Left lung (tissue), 14 donors: ENCODE measurements at regions of chr5 and their contacts with region 1.

Region 1: DNA sequence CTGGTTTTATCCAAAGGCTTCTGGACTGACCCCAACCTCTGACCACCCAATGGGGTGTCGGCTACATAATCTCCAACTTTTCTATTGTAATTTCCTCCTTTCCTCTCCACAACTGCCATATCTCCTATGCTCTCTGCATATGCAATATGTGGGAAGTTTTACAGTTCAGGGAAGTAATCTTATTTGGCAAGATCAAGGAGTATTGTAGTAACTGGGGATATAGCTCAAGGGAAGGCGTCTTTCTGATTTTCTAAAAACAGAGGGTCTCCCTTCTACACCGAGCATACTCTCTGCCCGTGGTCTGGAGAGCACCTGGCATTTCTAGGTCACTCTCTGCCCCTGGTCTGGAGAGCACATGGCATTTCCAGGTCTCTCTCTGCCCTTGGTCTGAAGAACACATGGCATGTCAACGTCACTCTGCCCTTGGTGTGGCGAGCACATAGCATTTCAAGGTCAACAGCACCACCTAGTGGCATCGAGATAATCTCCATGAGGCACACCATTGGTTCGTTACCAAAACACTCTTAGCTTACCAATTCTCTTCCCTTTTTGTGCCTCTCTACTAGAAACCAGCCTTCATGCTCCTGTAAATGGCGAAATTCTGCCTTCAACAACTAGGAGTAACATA is 616.4 kb upstream of the NUDT12 start:
- DNase-seq: no peak
- ATAC-seq: peak; percentile 89
- H3K4me3 ChIP-seq: no peak overlapping the region
- H3K27ac ChIP-seq: no peak overlapping the region
- H3K4me1 ChIP-seq: no peaks in the 10 kb centered on the region
- H3K27me3 ChIP-seq: no peaks in the 10 kb centered on the region
- CTCF ChIP-seq: peak in 1 of 2 donors; percentile 49

Region 2: GRCh38 chr5:103582364-103582763 is 596.6 kb before region 1 on chr5:
- intact Hi-C with region 1: loop called in 1 of 2 experiments (anchors 10 kb)
- DNase-seq: peak in 2 of 4 donors; percentile 40 to 69
- ATAC-seq: peak; percentile 52
- H3K4me3 ChIP-seq: no peak overlapping the region
- H3K27ac ChIP-seq: no peak overlapping the region
- H3K4me1 ChIP-seq: no peaks in the 10 kb centered on the region
- H3K27me3 ChIP-seq: no peaks in the 10 kb centered on the region
- CTCF ChIP-seq: peak in 1 of 2 donors; percentile 32

Region 3: GRCh38 chr5:104327801-104328200 is 148.9 kb after region 1 on chr5:
- intact Hi-C with region 1: no loop called
- DNase-seq: peak in 2 of 4 donors; percentile 53 to 61
- ATAC-seq: no peak
- H3K4me3 ChIP-seq: no peak overlapping the region
- H3K27ac ChIP-seq: no peak overlapping the region
- H3K4me1 ChIP-seq: no peaks in the 10 kb centered on the region
- H3K27me3 ChIP-seq: no peaks in the 10 kb centered on the region
- CTCF ChIP-seq: no peak

Region 4: DNA sequence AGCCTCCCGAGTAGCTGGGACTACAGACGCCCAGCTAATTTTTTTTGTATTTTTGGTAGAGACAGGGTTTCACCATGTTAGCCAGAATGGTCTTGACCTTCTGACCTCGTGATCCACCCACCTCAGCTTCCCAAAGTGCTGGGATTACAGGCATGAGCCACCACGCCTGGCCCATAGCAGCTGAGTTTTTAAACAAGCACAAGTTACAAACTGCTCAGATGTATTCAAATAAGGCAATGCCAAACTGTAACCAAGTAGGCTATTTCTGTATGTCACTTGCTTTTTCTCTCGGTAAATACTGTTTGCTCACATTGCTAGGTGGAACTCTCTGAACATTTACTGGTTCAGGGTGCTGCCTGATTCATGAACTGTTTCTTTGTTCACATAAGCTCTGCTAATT is 183.0 kb after region 1 on chr5:
- intact Hi-C with region 1: no loop called
- DNase-seq: no peak
- ATAC-seq: no peak
- H3K4me3 ChIP-seq: no peak overlapping the region
- H3K27ac ChIP-seq: no peak overlapping the region
- H3K4me1 ChIP-seq: no peaks in the 10 kb centered on the region
- H3K27me3 ChIP-seq: no peaks in the 10 kb centered on the region
- CTCF ChIP-seq: no peak

Region 5: DNA sequence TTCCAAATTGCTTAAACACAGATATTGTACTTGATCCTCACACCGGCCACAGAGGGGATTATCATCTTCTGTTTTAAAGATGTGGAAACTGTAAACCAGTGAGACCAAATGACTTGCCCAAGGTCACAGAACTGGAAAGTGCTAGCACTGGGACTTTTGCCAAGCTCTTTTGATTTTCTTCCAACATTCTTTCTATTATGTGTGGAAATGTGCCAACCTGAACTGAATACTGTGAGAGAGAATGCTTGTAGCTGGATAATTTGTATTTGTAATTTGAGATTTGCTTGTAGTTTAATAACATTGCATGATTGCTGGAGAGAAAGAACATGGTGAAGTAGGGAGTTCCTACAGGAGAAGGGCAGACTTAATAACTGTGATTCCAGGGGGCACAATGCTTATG is 361.5 kb after region 1 on chr5:
- intact Hi-C with region 1: no loop called
- DNase-seq: peak in 2 of 4 donors; percentile 83 to 87
- ATAC-seq: peak; percentile 14
- H3K4me3 ChIP-seq: no peak overlapping the region
- H3K27ac ChIP-seq: no peak overlapping the region
- H3K4me1 ChIP-seq: no peaks in the 10 kb centered on the region
- H3K27me3 ChIP-seq: no peaks in the 10 kb centered on the region
- CTCF ChIP-seq: no peak

Region 6: DNA sequence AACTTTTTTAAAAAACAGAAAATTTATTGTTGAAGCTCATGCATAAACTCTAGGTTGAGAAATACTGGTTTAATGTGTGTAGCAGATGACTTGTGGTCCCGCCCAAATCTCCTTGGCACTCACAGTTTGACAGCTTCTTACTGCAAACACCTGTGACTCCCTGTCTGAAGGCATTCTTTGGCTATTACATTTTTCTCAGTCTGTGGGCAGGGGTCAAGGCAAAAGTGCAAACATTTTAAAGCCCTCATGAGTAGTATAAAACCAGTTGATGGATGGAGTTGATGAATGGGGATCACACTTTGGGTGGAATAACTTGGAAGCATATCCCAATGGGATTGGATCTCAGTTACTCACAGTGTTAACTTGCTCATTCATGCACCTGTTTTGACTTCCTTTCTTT is 390.7 kb after region 1 on chr5:
- intact Hi-C with region 1: no loop called
- DNase-seq: no peak
- ATAC-seq: no peak
- H3K4me3 ChIP-seq: no peak overlapping the region
- H3K27ac ChIP-seq: no peak overlapping the region
- H3K4me1 ChIP-seq: no peaks in the 10 kb centered on the region
- H3K27me3 ChIP-seq: no peaks in the 10 kb centered on the region
- CTCF ChIP-seq: no peak